Dorsolateral prefrontal cortex (tissue), 120 donors: ENCODE measurements at regions of chr2 and their contacts with region 1.

Region 1: DNA sequence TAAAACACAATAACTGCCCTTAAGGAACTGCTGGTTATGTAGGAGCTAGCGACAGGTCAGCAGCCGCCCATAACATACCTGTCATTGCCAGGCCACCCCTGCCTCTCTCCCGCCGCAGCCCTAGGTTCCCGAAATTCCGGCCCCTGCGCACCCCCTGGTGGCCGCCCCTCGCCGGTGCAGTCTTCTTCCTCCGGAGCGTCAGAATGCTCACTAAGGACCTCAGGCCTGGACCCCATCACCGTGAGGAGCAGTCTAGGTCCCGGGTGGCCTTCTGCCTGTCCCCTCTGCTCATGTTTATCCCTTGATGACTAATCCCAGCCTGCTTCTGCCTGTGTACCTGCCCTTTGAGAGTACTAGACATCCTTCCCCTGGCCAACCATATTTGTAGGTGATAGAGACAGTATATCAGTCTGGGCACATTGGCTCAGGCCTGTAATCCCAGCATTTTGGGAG is 115.7 kb upstream of the SLC1A4 start:
- DNase-seq: peak; percentile 64 to 87 (median 80)
- H3K4me3 ChIP-seq: peak overlapping the region in 56 of 59 donors; percentile 3 to 60 (median 42)
- H3K27ac ChIP-seq: peak overlapping the region in 2 of 59 donors; percentile 39 to 45
- H3K27me3 ChIP-seq: no peaks in the 10 kb centered on the region
- CTCF ChIP-seq: peak; percentile 74 to 99 (median 97)

Region 2: DNA sequence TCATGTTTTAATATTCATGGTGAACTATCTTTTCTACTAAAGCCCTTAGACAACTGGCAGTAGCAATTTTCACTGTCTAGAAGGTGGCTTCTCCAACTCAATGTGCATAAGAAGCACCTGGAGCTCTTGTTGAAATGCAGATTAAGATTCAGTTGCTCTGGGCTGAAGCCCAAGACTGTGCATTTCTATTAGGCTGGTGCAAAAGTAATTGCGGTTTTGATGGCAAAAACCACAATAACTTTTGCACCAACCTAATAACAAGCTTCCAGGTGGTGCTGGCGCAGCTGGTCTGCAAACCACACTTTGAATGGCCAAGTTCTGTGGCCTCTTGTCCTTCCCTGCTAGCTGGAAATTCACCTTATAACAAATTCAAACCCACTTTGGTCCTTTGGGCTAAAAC is 827.6 kb before region 1 on chr2:
- intact Hi-C with region 1: loop called in 1 of 2 experiments (anchors 5 kb)
- DNase-seq: no peak
- H3K4me3 ChIP-seq: no peak overlapping the region
- H3K27ac ChIP-seq: no peak overlapping the region
- H3K27me3 ChIP-seq: no peaks in the 10 kb centered on the region
- CTCF ChIP-seq: no peak

Region 3: DNA sequence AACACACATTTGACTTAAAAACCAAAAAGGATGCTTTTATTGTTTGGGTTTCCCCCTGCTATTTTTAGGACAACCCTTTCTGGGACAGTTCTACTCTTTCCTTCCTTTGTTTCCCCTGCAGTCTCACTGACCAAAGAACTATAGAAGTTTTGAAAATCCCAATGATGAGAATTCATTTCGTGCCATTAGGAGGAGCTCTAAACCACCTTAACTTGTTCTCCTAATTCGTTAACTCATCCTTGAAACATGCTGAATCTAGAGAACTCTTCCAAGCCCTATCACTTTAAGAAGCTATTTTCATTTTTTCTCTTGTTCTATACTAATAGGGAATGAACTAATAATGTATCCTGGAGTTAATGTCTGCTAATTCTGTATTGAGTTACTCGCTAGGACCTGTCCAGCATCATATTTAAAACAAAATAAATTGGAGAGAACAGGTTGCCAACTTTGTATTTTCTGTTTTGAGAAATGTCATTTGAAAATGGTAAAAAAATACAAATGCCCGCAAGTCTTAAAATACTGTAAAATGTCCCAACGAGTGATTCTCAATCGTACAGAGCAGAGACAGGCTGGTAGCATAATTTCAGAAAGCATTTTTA is 286.5 kb before region 1 on chr2:
- intact Hi-C with region 1: loop called in 1 of 2 experiments (anchors 5 kb)
- DNase-seq: no peak
- H3K4me3 ChIP-seq: no peak overlapping the region
- H3K27ac ChIP-seq: peak overlapping the region in 4 of 59 donors; percentile 2 to 40 (median 18)
- H3K27me3 ChIP-seq: no peaks in the 10 kb centered on the region
- CTCF ChIP-seq: peak; percentile 16 to 85 (median 68)